Heart right ventricle (tissue), 16 donors: ENCODE measurements at regions of chr22 and their contacts with region 1.

Region 1: DNA sequence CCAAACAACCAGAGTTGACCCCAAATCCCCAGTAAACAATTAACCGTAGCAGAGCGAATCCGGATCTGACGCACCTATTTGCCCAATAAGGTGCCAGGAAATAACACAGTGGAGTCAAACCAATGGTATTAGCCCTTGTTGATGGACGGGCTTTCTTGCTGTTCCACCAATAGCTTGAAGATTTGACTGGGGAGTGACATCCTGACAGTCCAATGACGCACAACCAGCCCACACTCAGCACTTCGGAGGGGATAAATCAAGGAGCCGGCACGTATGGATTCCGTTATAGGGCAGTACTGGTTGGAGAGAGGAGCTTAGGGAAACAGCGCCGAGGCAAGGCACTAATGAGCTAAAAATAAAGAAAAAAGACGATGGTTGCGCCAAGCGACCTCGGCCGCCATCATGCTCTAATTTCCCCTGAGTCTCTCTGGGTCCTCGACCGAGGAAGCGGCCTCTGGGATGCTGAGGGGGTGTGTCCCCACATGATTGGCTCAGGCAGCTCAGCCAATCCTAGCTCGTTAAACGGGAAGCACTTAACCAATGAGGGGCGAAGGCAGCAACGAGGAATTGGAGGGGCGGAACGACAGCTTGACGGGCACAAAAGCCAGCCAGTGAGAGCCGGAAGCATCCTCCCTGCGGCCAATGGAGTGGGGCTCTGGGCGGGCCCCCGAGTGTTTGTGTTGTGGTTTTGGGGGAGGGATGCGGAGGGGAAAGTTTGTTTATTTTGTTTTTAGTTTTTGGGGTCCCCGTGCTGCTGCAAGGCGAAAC is 49.5 kb downstream of the FAM83F start:
- DNase-seq: peak; percentile 97 to 99
- ATAC-seq: peak; percentile 94 to 98 (median 97)
- H3K4me3 ChIP-seq: peak overlapping the region; percentile 40 to 82 (median 67)
- H3K27ac ChIP-seq: peak overlapping the region; percentile 77 to 98 (median 92)
- H3K4me1 ChIP-seq: peaks cover 7 to 63% (median 42%) of the 10 kb centered on the region in 9 donors
- H3K27me3 ChIP-seq: peaks cover 0 to 3% (median 0%) of the 10 kb centered on the region in 7 donors
- CTCF ChIP-seq: no peak

Region 2: DNA sequence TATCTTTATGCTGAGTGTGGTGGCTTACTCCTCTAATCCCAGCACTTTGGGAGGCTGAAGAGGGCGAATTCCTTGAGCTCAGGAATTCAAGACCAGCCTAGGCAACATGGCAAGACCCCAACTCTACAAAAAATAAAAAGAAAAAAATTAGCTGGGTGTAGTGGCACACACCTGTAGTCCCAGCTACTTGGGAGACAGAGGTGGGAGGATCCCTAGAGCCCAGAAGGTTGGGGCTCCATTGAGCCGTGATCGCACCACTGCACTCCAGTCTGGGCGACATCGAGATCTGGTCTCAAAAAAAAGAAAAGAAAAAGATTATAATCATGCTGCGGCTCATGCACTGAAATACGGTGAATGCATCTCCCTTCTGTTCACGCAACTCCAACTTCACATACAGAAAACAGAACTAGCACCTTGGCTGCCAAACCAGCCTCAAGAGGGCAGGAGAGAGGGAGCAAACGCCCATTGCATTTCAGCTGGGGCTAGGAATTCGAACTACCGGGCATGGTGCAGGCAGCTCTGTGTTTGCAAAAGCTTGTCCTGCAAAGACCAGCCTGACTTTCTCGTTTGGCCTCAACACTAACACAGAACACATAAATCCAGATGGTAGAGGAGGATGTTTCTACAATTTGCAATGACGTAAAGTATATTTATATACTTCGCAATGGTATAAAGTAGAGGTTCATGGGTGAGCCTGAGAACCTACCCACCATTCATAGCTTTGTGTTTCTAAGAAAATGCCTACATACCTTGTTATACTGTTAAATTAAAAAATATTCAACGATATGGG is 700.8 kb before region 1 on chr22:
- intact Hi-C with region 1: loop called in 1 of 10 experiments (anchors 10 kb)
- DNase-seq: peak in 1 of 2 donors; percentile 62
- ATAC-seq: peak; percentile 43 to 84 (median 72)
- H3K4me3 ChIP-seq: no peak overlapping the region
- H3K27ac ChIP-seq: no peak overlapping the region
- H3K4me1 ChIP-seq: peaks cover 0 to 7% (median 0%) of the 10 kb centered on the region in 9 donors
- H3K27me3 ChIP-seq: peaks cover 0 to 15% (median 0%) of the 10 kb centered on the region in 7 donors
- CTCF ChIP-seq: peak; percentile 40 to 82 (median 66)

Region 3: DNA sequence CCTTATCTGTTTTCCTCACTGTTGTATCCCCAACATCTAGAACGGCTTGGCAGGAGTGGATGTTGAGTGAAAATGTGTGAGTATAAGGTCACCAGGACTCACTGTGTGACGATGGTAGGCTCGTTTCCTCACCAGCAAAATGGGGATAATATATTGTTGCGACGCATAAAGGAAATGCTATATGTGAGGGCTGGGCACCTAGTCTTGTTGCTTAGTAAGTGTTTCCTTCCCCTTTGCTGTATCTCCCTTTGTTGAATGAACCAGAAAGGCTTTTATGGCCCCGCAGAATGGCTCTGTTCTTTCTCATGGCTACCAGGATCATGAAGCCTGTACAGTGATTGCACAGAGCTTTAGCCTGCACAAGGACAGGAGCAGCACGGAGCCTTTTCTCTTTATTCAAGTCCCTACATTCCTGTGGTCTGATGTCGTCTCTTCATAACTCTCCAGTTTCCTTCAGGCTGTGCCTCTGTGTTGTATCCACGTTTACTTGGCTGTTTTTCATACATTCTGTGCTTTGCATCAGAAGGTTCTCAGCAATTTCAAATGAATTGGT is 138.8 kb after region 1 on chr22:
- intact Hi-C with region 1: loop called in 6 of 10 experiments (anchors 5 to 10 kb)
- DNase-seq: no peak
- ATAC-seq: peak in 7 of 8 donors; percentile 14 to 50 (median 39)
- H3K4me3 ChIP-seq: peak overlapping the region in 4 of 10 donors; percentile 3 to 6 (median 4)
- H3K27ac ChIP-seq: peak overlapping the region in 9 of 10 donors; percentile 31 to 71 (median 53)
- H3K4me1 ChIP-seq: peaks cover 6 to 92% (median 78%) of the 10 kb centered on the region in 9 donors
- H3K27me3 ChIP-seq: no peaks in the 10 kb centered on the region
- CTCF ChIP-seq: no peak

Region 4: GRCh38 chr22:40276996-40277823 is 232.9 kb after region 1 on chr22:
- intact Hi-C with region 1: loop called in 4 of 10 experiments (anchors 5 to 10 kb)
- DNase-seq: peak in 1 of 2 donors; percentile 38
- ATAC-seq: peak; percentile 34 to 81 (median 62)
- H3K4me3 ChIP-seq: peak overlapping the region in 9 of 10 donors; percentile 4 to 48 (median 45)
- H3K27ac ChIP-seq: peak overlapping the region; percentile 56 to 88 (median 80)
- H3K4me1 ChIP-seq: peaks cover 0 to 52% (median 24%) of the 10 kb centered on the region in 9 donors
- H3K27me3 ChIP-seq: no peaks in the 10 kb centered on the region
- CTCF ChIP-seq: no peak